ENCODE measurements at regions of chr1 and their contacts with region 1.

Region 1: GRCh38 chr1:214473387-214473786 is 78.0 kb downstream of the PTPN14 start:
- DNase-seq: peak; percentile 23
- H3K27ac ChIP-seq: no peak overlapping the region
- CTCF ChIP-seq: no peak

Region 2: GRCh38 chr1:214386747-214387146 is 86.6 kb before region 1 on chr1:
- CTCF ChIA-PET with region 1: interaction called, 11 read pairs
- POLR2A ChIA-PET with region 1: no interaction called
- DNase-seq: peak; percentile 39
- H3K27ac ChIP-seq: peak overlapping the region; percentile 53
- CTCF ChIP-seq: no peak